Mammary epithelial cell (primary cell): ENCODE measurements at regions of chr18 and their contacts with region 1.

Region 1: DNA sequence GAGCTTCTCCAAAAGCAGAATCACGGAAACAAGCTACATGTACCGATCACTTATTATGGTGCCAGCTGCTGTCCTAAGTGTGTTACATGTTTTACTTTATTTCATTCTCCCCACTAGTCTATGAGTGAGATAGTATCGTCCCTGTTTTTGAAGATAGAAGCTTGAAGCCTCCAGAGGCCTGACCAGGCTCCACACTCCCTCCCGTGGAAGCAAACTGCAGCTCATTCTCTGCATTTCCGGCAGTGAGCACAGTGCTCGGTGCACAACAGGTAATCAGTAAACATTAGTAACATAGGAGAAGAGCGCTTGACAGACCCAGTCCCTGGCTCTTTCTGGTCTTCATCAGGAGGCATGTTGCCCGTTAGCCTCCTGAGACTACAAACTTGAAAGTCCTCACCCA is 72.8 kb downstream of the ZBTB7C start:
- DNase-seq: no peak
- H3K4me3 ChIP-seq: no peak overlapping the region
- H3K27ac ChIP-seq: no peak overlapping the region
- H3K4me1 ChIP-seq: peaks cover 7% of the 10 kb centered on the region
- H3K27me3 ChIP-seq: no peaks in the 10 kb centered on the region
- CTCF ChIP-seq: peak; percentile 53 to 83

Region 2: GRCh38 chr18:48270951-48271350 is 65.4 kb before region 1 on chr18:
- CTCF ChIA-PET with region 1: no interaction called
- dilution Hi-C with region 1: no loop called
- in situ Hi-C with region 1: no loop called
- intact Hi-C with region 1: no loop called
- DNase-seq: no peak
- H3K4me3 ChIP-seq: no peak overlapping the region
- H3K27ac ChIP-seq: no peak overlapping the region
- H3K4me1 ChIP-seq: no peaks in the 10 kb centered on the region
- H3K27me3 ChIP-seq: no peaks in the 10 kb centered on the region
- CTCF ChIP-seq: no peak

Region 3: GRCh38 chr18:48399303-48400075 is 63.2 kb after region 1 on chr18:
- CTCF ChIA-PET with region 1: no interaction called
- dilution Hi-C with region 1: no loop called
- in situ Hi-C with region 1: no loop called
- intact Hi-C with region 1: no loop called
- DNase-seq: no peak
- H3K4me3 ChIP-seq: no peak overlapping the region
- H3K27ac ChIP-seq: no peak overlapping the region
- H3K4me1 ChIP-seq: peaks cover 27% of the 10 kb centered on the region
- H3K27me3 ChIP-seq: no peaks in the 10 kb centered on the region
- CTCF ChIP-seq: no peak

Region 4: GRCh38 chr18:48410095-48410920 is 74.0 kb after region 1 on chr18:
- CTCF ChIA-PET with region 1: no interaction called
- dilution Hi-C with region 1: no loop called
- in situ Hi-C with region 1: no loop called
- intact Hi-C with region 1: loop called (anchors 2 kb)
- DNase-seq: peak; percentile 93
- H3K4me3 ChIP-seq: peak overlapping the region; percentile 75 to 84 (median 82)
- H3K27ac ChIP-seq: peak overlapping the region; percentile 52
- H3K4me1 ChIP-seq: peaks cover 31% of the 10 kb centered on the region
- H3K27me3 ChIP-seq: no peaks in the 10 kb centered on the region
- CTCF ChIP-seq: peak; percentile 20 to 24

Region 5: DNA sequence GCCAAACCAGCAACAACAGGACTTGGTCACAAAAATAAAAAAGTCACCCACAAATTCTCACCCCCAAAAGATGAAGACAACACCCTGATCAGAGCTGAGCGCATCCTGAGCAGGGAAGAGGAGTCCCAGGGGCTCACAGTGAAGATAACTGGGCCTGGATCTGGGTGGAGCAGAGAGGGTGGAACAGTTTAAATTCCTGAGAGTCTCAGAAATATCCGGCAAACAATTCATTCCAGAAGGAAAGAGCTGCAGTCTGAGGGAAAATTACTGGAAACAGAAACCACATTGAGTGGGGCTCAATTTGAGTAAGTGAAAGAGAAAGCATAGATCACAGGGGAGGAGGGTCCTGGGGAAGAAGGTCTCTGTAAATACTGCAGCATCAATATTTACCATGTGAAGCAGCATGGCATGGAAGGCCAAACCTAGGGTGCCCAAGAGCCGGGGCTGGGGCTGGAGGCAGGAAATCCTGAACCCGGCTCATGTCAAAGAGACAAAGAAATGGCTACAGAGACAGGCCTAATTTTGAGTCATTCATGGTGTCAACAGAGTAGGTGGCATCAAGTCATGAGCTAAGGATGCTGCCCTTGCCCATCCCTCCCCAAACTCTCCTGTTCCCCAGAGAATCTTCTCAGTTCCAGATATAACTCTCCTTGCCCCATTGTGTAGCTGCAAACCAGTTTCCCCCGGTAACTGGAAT is 134.3 kb after region 1 on chr18:
- CTCF ChIA-PET with region 1: no interaction called
- dilution Hi-C with region 1: no loop called
- in situ Hi-C with region 1: no loop called
- intact Hi-C with region 1: loop called (anchors 1 kb)
- DNase-seq: no peak
- H3K4me3 ChIP-seq: no peak overlapping the region
- H3K27ac ChIP-seq: no peak overlapping the region
- H3K4me1 ChIP-seq: no peaks in the 10 kb centered on the region
- H3K27me3 ChIP-seq: no peaks in the 10 kb centered on the region
- CTCF ChIP-seq: no peak

Region 6: GRCh38 chr18:48514786-48515185 is 178.5 kb after region 1 on chr18:
- CTCF ChIA-PET with region 1: no interaction called
- dilution Hi-C with region 1: no loop called
- in situ Hi-C with region 1: no loop called
- intact Hi-C with region 1: no loop called
- DNase-seq: no peak
- H3K4me3 ChIP-seq: no peak overlapping the region
- H3K27ac ChIP-seq: no peak overlapping the region
- H3K4me1 ChIP-seq: no peaks in the 10 kb centered on the region
- H3K27me3 ChIP-seq: no peaks in the 10 kb centered on the region
- CTCF ChIP-seq: no peak